ENCODE measurements at regions of chr3 and their contacts with region 1.

Region 1: GRCh38 chr3:66394019-66394752 is 106.6 kb downstream of the LRIG1 start:
- DNase-seq: peak in 8 of 9 donors; percentile 19 to 74 (median 64)
- ATAC-seq: peak; percentile 96
- H3K4me3 ChIP-seq: peak overlapping the region; percentile 45
- H3K4me3 Mint-ChIP-seq: peak overlapping the region; percentile 73 to 97 (median 87)
- H3K27ac ChIP-seq: peak overlapping the region; percentile 48
- H3K27ac Mint-ChIP-seq: peak overlapping the region; percentile 82 to 98 (median 95)
- H3K4me1 ChIP-seq: peaks cover 20 to 47% of the 10 kb centered on the region in 2 donors
- H3K4me1 Mint-ChIP-seq: peaks cover 26 to 62% (median 61%) of the 10 kb centered on the region in 7 donors
- H3K27me3 ChIP-seq: no peaks in the 10 kb centered on the region
- H3K27me3 Mint-ChIP-seq: no peaks in the 10 kb centered on the region

Region 2: DNA sequence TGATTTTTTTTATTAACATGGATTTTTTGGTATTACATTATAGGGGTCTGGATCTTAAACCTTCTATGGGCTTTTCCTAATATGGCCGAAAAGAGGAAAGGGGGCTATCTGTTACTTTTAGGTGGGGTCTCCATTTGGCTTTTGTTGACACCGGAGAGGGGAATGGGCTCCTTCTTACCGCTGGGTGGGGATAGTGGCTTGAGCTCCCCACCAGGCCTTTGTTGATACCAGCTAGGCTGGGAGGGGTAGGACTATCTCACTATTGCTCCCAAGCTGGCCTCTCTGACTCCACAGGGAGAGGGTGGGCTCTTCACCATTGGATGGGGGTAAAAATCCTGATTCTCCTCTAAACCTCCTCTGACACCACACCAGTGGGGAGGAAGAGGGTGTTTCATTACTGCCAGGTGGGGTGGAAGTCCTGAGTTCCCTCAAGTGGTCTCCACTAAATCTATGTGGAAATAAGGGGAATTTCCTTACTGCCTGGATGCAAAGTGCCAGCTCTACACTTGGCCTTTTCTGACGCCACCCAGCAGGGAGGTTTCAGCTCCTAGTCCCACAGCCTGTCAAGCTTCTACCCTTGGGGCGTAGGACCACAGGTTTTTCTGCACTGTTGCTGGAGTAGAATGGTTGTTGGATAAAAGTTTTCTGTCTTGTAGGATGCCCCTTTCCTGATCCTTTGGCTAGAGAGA is 927.7 kb before region 1 on chr3:
- CTCF ChIA-PET with region 1: no interaction called
- POLR2A ChIA-PET with region 1: no interaction called
- intact Hi-C with region 1: no loop called
- DNase-seq: no peak
- ATAC-seq: no peak
- H3K4me3 ChIP-seq: no peak overlapping the region
- H3K4me3 Mint-ChIP-seq: no peak overlapping the region
- H3K27ac ChIP-seq: no peak overlapping the region
- H3K27ac Mint-ChIP-seq: no peak overlapping the region
- H3K4me1 ChIP-seq: no peaks in the 10 kb centered on the region
- H3K4me1 Mint-ChIP-seq: no peaks in the 10 kb centered on the region
- H3K27me3 ChIP-seq: no peaks in the 10 kb centered on the region
- H3K27me3 Mint-ChIP-seq: no peaks in the 10 kb centered on the region

Region 3: GRCh38 chr3:66220602-66221377 is 173.4 kb before region 1 on chr3 and contains the start of gene SLC25A26:
- CTCF ChIA-PET with region 1: no interaction called
- POLR2A ChIA-PET with region 1: no interaction called
- intact Hi-C with region 1: loop called in 1 of 2 experiments (anchors 1 kb)
- DNase-seq: peak; percentile 90 to 99 (median 97)
- ATAC-seq: peak; percentile 99
- H3K4me3 ChIP-seq: peak within 1 kb of the TSS; percentile 70
- H3K4me3 Mint-ChIP-seq: peak within 1 kb of the TSS; percentile 91 to 99 (median 96)
- H3K27ac ChIP-seq: peak within 1 kb of the TSS; percentile 90
- H3K27ac Mint-ChIP-seq: peak within 1 kb of the TSS; percentile 85 to 98 (median 95)
- H3K4me1 ChIP-seq: peaks cover 7% of the 10 kb centered on the region in 2 donors
- H3K4me1 Mint-ChIP-seq: peaks cover 15 to 55% (median 44%) of the 10 kb centered on the region in 7 donors
- H3K27me3 ChIP-seq: no peaks in the 10 kb centered on the region
- H3K27me3 Mint-ChIP-seq: peaks cover 0 to 2% (median 0%) of the 10 kb centered on the region in 5 donors
- total RNA-seq, gene SLC25A26: 14.1 to 25.5 (median 17.9) TPM

Region 4: GRCh38 chr3:66302288-66302687 is 91.9 kb before region 1 on chr3:
- CTCF ChIA-PET with region 1: interaction called, 3 read pairs
- POLR2A ChIA-PET with region 1: interaction called, 6 read pairs
- intact Hi-C with region 1: loop called in 1 of 2 experiments (anchors 5 kb)
- DNase-seq: peak in 7 of 9 donors; percentile 44 to 78 (median 64)
- ATAC-seq: peak; percentile 87
- H3K4me3 ChIP-seq: no peak overlapping the region
- H3K4me3 Mint-ChIP-seq: peak overlapping the region in 9 of 10 donors; percentile 29 to 71 (median 50)
- H3K27ac ChIP-seq: peak overlapping the region; percentile 53
- H3K27ac Mint-ChIP-seq: peak overlapping the region; percentile 71 to 99 (median 94)
- H3K4me1 ChIP-seq: peaks cover 49 to 79% of the 10 kb centered on the region in 2 donors
- H3K4me1 Mint-ChIP-seq: peaks cover 50 to 86% (median 69%) of the 10 kb centered on the region in 7 donors
- H3K27me3 ChIP-seq: no peaks in the 10 kb centered on the region
- H3K27me3 Mint-ChIP-seq: no peaks in the 10 kb centered on the region

Region 5: DNA sequence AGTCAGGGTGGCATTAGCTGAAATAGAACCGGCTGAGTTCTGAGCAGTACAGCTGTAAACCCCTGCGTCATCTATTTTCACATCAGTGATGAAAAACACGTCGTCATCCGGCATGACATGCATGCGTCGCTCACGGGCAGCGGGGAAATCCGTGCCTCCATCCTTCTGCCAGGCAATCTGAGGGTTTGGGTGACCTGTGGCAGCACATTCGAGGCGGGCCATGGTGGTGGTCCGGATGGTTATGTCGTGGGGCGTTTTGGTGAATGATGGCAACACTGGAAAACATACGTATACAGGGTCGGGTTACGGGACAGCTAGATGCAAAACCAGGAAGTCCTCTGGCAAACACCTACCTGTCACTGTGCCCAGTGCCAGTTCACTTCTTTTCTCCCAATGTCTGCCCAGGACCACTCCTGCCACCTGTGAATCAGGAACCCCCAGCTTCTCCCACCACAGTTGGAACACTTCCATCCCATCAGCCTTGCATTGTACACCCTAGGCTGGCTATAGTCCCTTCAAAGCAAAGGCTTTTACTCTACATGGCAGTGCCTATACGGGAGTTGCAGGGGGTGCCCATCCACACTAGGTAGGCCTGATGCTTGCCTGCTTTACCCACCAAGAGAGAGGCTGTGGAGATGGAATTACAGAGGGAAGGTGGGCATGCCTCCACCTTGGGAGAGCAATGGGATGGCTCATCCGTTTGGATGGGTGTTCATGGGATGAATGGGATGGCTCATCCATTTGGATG is 10.0 kb before region 1 on chr3:
- CTCF ChIA-PET with region 1: no interaction called
- POLR2A ChIA-PET with region 1: no interaction called
- intact Hi-C with region 1: no loop called
- DNase-seq: no peak
- ATAC-seq: no peak
- H3K4me3 ChIP-seq: no peak overlapping the region
- H3K4me3 Mint-ChIP-seq: no peak overlapping the region
- H3K27ac ChIP-seq: no peak overlapping the region
- H3K27ac Mint-ChIP-seq: peak overlapping the region in 5 of 9 donors; percentile 20 to 45 (median 36)
- H3K4me1 ChIP-seq: no peaks in the 10 kb centered on the region
- H3K4me1 Mint-ChIP-seq: peaks cover 5 to 23% (median 11%) of the 10 kb centered on the region in 7 donors
- H3K27me3 ChIP-seq: no peaks in the 10 kb centered on the region
- H3K27me3 Mint-ChIP-seq: no peaks in the 10 kb centered on the region

Region 6: DNA sequence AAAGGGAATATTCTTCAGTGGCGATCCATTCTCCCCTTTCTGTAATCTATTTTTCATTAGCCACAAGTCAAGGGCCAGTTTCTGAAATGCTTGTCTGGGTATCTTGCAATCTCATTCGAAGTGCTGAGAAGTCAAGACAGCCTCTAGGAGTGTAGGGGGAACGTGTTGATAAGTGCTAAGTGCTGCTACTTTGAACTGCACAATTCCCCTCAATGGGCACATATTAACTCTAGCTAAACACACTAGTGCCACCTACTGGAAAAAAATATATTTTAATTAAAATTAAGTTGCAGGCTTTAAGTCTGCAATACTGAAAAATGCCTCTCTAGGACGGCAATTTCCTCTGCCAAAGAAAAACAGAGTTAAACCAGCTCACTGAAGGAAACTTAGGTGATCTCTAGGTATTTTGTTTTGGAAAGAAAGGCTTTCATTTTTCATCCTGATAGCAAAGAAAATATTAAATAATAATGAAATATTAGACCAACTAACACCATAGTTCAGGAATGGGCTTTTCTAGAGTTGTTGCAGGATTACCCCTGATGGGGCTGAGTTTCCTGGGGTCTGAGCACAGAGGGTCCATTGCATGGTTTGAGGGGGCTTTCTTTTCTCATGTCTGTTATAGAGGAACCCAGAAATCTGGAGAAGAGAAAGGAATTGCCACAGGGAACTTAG is 422.0 kb after region 1 on chr3:
- CTCF ChIA-PET with region 1: no interaction called
- POLR2A ChIA-PET with region 1: no interaction called
- intact Hi-C with region 1: loop called in 1 of 2 experiments (anchors 5 kb)
- DNase-seq: peak in 6 of 9 donors; percentile 39 to 64 (median 62)
- ATAC-seq: peak; percentile 85
- H3K4me3 ChIP-seq: no peak overlapping the region
- H3K4me3 Mint-ChIP-seq: no peak overlapping the region
- H3K27ac ChIP-seq: no peak overlapping the region
- H3K27ac Mint-ChIP-seq: no peak overlapping the region
- H3K4me1 ChIP-seq: no peaks in the 10 kb centered on the region
- H3K4me1 Mint-ChIP-seq: peaks cover 0 to 2% (median 0%) of the 10 kb centered on the region in 7 donors
- H3K27me3 ChIP-seq: no peaks in the 10 kb centered on the region
- H3K27me3 Mint-ChIP-seq: peaks cover 0 to 22% (median 3%) of the 10 kb centered on the region in 5 donors

Measured in naive thymus-derived CD4-positive, alpha-beta T cell (primary cell).